GM10248 (cell line): ENCODE measurements at regions of chr10 and their contacts with region 1.

Region 1: DNA sequence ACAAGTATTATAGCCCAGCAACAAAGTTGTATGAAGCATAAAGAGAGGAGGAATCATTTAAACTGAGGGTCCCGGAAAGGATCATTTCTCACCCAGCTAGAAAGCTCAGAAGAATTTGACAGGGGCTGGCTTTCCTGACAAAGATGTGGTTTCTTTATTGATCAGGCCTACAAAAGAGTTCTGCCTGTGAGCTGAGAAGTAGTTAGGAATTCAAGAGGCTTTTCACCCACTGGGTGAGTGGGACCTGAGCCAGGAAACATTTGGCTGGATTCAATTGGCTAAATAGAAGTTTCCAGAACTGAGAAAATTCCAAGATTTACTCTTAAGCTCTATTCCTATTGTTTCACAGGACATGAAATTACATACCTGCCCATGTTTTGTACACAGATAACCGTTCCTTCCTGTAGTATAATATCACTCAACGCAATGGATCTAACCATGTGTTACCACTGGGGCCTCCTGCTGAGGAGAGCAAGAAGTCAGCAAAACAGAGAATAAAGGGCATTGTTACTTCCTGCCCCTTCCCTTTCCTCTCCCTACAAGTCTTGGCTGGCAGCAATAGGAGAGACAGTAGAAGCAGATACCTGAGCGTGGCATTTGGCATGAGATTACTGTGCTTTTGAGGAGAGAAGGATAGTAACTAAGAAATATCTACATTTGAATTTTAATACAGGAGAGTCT is 53.9 kb upstream of the PAPSS2 start:
- DNase-seq: no peak
- CTCF ChIP-seq: no peak

Region 2: DNA sequence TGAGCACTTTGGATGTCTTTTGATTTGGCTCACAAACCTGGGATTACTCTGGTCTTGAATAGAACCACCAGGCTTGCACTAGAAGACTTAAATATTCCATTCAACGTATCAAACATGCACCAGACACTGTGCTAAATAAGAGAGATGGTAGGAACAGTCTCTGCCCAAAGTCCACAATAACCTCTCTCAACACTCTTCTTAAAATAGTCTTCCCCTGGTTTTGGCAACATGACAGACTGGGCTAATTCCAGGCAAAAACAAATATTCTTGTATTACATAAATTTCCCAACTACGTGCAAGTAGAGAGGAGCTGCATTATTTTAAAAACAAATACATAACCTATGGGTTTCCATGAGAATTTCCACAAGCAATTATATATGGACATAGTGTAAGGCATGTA is 10.9 kb before region 1 on chr10:
- CTCF ChIA-PET with region 1: interaction called, 11 read pairs
- POLR2A ChIA-PET with region 1: no interaction called
- DNase-seq: no peak
- CTCF ChIP-seq: no peak

Region 3: DNA sequence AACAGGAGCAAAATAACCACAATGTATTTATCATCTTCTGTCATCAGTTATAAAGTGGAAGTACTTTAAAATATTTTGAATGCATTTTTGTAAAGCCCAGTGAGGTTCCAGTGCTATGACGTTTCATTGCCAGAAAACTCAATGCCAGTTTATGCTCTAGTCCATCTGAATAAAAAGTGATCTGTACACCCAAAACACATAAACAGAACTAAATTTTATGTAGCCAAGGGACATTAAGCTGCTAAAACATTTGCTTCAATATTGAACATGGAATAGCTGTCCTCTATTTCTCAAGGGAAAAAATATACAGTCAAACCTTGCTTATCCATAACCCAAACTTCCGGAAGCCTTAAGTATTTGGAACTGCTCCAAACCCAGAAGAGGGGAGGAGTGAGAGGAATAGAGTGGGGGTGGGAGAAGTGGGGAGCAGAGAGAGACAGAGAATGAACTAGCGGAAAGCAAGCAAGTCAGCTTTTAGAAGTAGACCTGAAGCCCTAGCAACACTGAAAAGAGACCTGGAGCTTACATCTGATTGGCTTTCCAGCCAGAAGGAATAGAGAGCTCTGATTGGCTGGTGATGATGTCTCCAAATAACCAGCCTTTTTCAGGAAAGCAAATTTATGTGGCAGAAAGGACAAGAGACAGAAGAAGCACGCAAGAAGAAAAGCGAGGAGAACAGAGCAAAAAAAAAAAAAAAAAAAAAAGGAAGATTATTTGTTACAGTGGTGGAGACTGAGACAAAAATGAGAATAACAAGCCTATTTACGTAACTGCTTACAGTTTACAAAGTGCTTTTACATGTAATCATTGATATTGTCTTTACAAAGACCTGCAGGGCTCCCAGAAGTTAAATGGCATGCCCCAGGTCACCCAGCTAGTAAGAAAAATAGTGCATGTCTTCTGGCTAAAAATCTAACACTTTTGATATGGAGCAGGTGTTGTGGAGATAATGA is 781.3 kb after region 1 on chr10:
- CTCF ChIA-PET with region 1: no interaction called
- POLR2A ChIA-PET with region 1: no interaction called
- DNase-seq: peak; percentile 54
- CTCF ChIP-seq: no peak